Activated CD8-positive, alpha-beta T cell treated with anti-CD3 and anti-CD28 coated beads, Interleukin-2, amount 10 ng/mL, durations not matched to agents 7 days and 5 days (primary cell): ENCODE measurements at regions of chr16 and their contacts with region 1.

Region 1: GRCh38 chr16:67521095-67521804 is 7.4 kb upstream of the RIPOR1 start:
- DNase-seq: peak; percentile 98
- ATAC-seq: peak; percentile 92
- H3K4me3 Mint-ChIP-seq: peak overlapping the region; percentile 84
- H3K27ac Mint-ChIP-seq: peak overlapping the region; percentile 94
- H3K4me1 Mint-ChIP-seq: peaks cover 47% of the 10 kb centered on the region
- H3K27me3 Mint-ChIP-seq: peaks cover 8% of the 10 kb centered on the region

Region 2: DNA sequence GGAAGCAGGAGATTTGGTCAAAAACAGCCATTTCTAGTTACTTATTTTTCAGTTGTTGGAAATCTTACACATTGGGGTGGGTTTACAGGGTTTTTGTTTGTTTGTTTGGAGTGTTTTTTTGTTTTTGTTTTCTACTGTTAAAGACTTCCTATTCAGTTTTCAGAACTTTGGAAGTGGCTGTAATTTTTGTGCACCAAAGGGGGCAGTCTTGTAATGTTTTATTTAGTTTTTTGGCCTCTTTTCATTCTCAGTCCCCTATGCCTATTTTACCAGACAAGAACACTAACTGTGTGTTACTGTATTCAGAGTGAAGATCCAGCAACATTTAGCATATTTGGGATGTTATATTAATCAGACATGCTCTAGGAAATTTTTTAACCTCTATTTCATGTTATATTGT is 148.6 kb before region 1 on chr16:
- CTCF ChIA-PET with region 1: no interaction called
- POLR2A ChIA-PET with region 1: no interaction called
- DNase-seq: no peak
- ATAC-seq: no peak
- H3K4me3 Mint-ChIP-seq: no peak overlapping the region
- H3K27ac Mint-ChIP-seq: no peak overlapping the region
- H3K4me1 Mint-ChIP-seq: no peaks in the 10 kb centered on the region
- H3K27me3 Mint-ChIP-seq: peaks cover 6% of the 10 kb centered on the region

Region 3: DNA sequence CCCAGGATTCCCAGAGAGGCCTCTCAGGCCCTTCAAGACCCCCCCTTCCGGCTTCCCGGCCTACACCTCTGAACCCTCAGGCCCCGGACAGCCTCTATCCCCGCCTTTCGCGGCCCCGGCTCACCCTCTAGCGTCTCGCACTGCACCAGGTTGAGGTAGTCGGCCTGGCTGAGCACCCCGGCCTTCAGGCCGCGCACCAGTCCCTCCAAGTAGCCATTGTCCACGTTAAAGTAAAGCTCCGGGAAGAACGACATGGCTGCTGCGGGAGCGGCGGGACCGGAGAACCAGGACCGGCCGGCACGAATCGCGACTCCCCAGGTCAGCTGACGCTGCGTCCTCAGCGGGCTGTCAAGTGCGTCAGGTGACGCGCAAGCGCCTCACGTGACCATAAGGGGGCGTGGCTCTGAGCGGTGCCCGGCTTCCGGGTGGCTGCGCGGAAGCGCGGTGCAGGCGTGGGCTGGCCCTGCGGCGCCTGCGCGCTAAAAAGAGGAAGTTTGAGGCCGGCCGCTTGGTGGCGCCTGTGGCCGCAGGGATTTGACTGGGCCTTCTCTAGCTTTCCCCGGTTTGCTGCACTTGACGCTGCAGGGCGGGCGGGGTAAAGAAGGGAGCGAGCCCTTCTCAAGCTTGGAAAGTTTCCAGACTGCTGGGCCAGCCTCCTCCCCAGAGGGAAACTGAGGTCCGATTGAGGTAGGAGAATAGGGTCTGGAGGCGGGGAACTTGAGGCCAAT is 40.3 kb before region 1 on chr16 and contains the start of gene ATP6V0D1:
- CTCF ChIA-PET with region 1: interaction called, 95 read pairs
- POLR2A ChIA-PET with region 1: interaction called, 8 read pairs
- DNase-seq: peak; percentile 99
- ATAC-seq: peak; percentile 89
- H3K4me3 Mint-ChIP-seq: peak within 1 kb of the TSS; percentile 98
- H3K27ac Mint-ChIP-seq: peak within 1 kb of the TSS; percentile 99
- H3K4me1 Mint-ChIP-seq: peaks cover 38% of the 10 kb centered on the region
- H3K27me3 Mint-ChIP-seq: no peaks in the 10 kb centered on the region
- total RNA-seq, gene ATP6V0D1: 52.7 to 58.1 TPM

Region 4: GRCh38 chr16:67504041-67505021 is 16.9 kb before region 1 on chr16:
- CTCF ChIA-PET with region 1: interaction called, 277 read pairs
- POLR2A ChIA-PET with region 1: interaction called, 3 read pairs
- DNase-seq: peak; percentile 85
- ATAC-seq: peak; percentile 94
- H3K4me3 Mint-ChIP-seq: peak overlapping the region; percentile 45
- H3K27ac Mint-ChIP-seq: peak overlapping the region; percentile 96
- H3K4me1 Mint-ChIP-seq: peaks cover 42% of the 10 kb centered on the region
- H3K27me3 Mint-ChIP-seq: no peaks in the 10 kb centered on the region

Region 5: GRCh38 chr16:67555795-67556212 is 34.6 kb after region 1 on chr16:
- CTCF ChIA-PET with region 1: interaction called, 79 read pairs
- POLR2A ChIA-PET with region 1: no interaction called
- DNase-seq: peak; percentile 52
- ATAC-seq: peak; percentile 91
- H3K4me3 Mint-ChIP-seq: peak overlapping the region; percentile 61
- H3K27ac Mint-ChIP-seq: peak overlapping the region; percentile 99
- H3K4me1 Mint-ChIP-seq: peaks cover 60% of the 10 kb centered on the region
- H3K27me3 Mint-ChIP-seq: no peaks in the 10 kb centered on the region

Region 6: GRCh38 chr16:67641779-67642708 is 120.8 kb after region 1 on chr16:
- CTCF ChIA-PET with region 1: interaction called, 129 read pairs
- POLR2A ChIA-PET with region 1: interaction called, 10 read pairs
- DNase-seq: no peak
- ATAC-seq: no peak
- H3K4me3 Mint-ChIP-seq: no peak overlapping the region
- H3K27ac Mint-ChIP-seq: no peak overlapping the region
- H3K4me1 Mint-ChIP-seq: peaks cover 19% of the 10 kb centered on the region
- H3K27me3 Mint-ChIP-seq: no peaks in the 10 kb centered on the region

Region 7: GRCh38 chr16:67697422-67698185 is 176.4 kb after region 1 on chr16:
- CTCF ChIA-PET with region 1: interaction called, 12 read pairs
- POLR2A ChIA-PET with region 1: no interaction called
- DNase-seq: no peak
- ATAC-seq: no peak
- H3K4me3 Mint-ChIP-seq: no peak overlapping the region
- H3K27ac Mint-ChIP-seq: no peak overlapping the region
- H3K4me1 Mint-ChIP-seq: peaks cover 10% of the 10 kb centered on the region
- H3K27me3 Mint-ChIP-seq: no peaks in the 10 kb centered on the region